ENCODE measurements at regions of chr7 and their contacts with region 1.

Region 1: GRCh38 chr7:27150568-27151340 is 1.6 kb downstream of the HOXA3 start:
- DNase-seq: peak in 1 of 2 experiments; percentile 86
- H3K4me3 ChIP-seq: peak overlapping the region in 3 of 4 experiments; percentile 19 to 45 (median 29); a peak in 4 of 8 replicates
- H3K27ac ChIP-seq: no peak overlapping the region
- H3K4me1 ChIP-seq: peaks cover 0 to 6% (median 3%) of the 10 kb centered on the region in 4 experiments; a peak in 3 of 7 replicates
- H3K27me3 ChIP-seq: peaks cover 97 to 100% (median 100%) of the 10 kb centered on the region in 4 experiments
- CTCF ChIP-seq: peak in 2 of 3 experiments; percentile 78 to 83; a peak in 3 of 4 replicates
- EP300 ChIP-seq: no peak
- POLR2A ChIP-seq: no peak
- RAD21 ChIP-seq: peak; percentile 48 to 66

Region 2: GRCh38 chr7:27095897-27096767 is 54.6 kb before region 1 on chr7 and contains the start of gene HOXA1:
- CTCF ChIA-PET with region 1: interaction called, 123 read pairs
- POLR2A ChIA-PET with region 1: no interaction called
- DNase-seq: peak in 1 of 2 experiments; percentile 79
- H3K4me3 ChIP-seq: peak within 1 kb of the TSS; percentile 22 to 63 (median 30); a peak in 7 of 8 replicates
- H3K27ac ChIP-seq: no peak within 1 kb of the TSS
- H3K4me1 ChIP-seq: peaks cover under 1 to 26% (median 16%) of the 10 kb centered on the region in 4 experiments
- H3K27me3 ChIP-seq: peaks cover 86 to 100% (median 95%) of the 10 kb centered on the region in 4 experiments
- CTCF ChIP-seq: no peak
- EP300 ChIP-seq: no peak
- POLR2A ChIP-seq: no peak
- RAD21 ChIP-seq: peak; percentile 8 to 25; a peak in 2 of 4 replicates
- total RNA-seq, gene HOXA1: not detected in 2 replicates

Measured in H1 (cell line).